ENCODE measurements at regions of chr20 and their contacts with region 1.

Region 1: GRCh38 chr20:57480444-57481160 is 44.3 kb downstream of the CTCFL start:
- DNase-seq: no peak
- H3K4me3 ChIP-seq: no peak overlapping the region
- H3K27ac ChIP-seq: no peak overlapping the region
- H3K4me1 ChIP-seq: no peaks in the 10 kb centered on the region
- H3K27me3 ChIP-seq: no peaks in the 10 kb centered on the region
- CTCF ChIP-seq: no peak

Region 2: GRCh38 chr20:57374931-57375651 is 105.5 kb before region 1 on chr20:
- CTCF ChIA-PET with region 1: no interaction called
- dilution Hi-C with region 1: loop called (anchors 5 kb)
- in situ Hi-C with region 1: no loop called
- intact Hi-C with region 1: no loop called
- DNase-seq: no peak
- H3K4me3 ChIP-seq: no peak overlapping the region
- H3K27ac ChIP-seq: no peak overlapping the region
- H3K4me1 ChIP-seq: no peaks in the 10 kb centered on the region
- H3K27me3 ChIP-seq: no peaks in the 10 kb centered on the region
- CTCF ChIP-seq: no peak

Region 3: DNA sequence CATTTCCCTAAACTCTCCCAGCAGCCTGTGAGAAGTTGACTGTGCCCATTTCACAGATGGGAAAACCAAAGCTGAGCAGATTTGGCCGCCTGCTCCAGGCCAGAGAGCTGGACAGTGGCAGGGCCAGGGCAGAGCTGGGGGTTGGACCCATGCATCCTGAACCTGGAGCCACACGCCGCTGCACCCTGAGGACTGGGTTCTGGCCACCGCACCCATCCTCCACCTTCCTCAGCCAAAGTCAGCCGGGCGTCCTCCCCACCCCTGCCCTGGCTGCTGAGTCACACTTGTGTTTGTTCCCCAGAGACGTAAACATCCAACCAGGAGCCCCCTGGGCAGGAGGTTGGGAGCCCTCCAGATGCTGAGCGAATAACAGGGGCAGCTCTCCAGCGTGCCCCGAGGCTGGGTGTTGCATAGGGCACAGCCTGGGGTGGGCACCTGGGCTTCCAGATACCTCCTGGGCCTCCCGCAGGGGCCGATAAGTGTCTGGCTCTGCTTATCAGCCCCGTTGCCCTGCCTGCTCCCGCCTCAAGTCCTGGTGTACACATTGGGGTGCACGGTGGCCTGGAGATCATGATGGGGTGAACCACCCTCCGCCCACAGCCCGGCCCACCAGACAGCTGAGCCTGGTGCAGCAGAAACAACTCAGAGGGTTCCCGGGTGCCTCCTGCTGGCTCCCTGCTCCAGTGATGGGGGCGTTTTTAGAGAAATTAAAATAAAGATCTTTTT is 65.6 kb before region 1 on chr20:
- CTCF ChIA-PET with region 1: no interaction called
- dilution Hi-C with region 1: loop called (anchors 5 kb)
- in situ Hi-C with region 1: no loop called
- intact Hi-C with region 1: no loop called
- DNase-seq: no peak
- H3K4me3 ChIP-seq: no peak overlapping the region
- H3K27ac ChIP-seq: no peak overlapping the region
- H3K4me1 ChIP-seq: no peaks in the 10 kb centered on the region
- H3K27me3 ChIP-seq: no peaks in the 10 kb centered on the region
- CTCF ChIP-seq: no peak

Region 4: GRCh38 chr20:57440678-57441520 is 39.7 kb before region 1 on chr20:
- CTCF ChIA-PET with region 1: no interaction called
- dilution Hi-C with region 1: loop called (anchors 5 kb)
- in situ Hi-C with region 1: no loop called
- intact Hi-C with region 1: no loop called
- DNase-seq: no peak
- H3K4me3 ChIP-seq: no peak overlapping the region
- H3K27ac ChIP-seq: no peak overlapping the region
- H3K4me1 ChIP-seq: peaks cover 10% of the 10 kb centered on the region
- H3K27me3 ChIP-seq: no peaks in the 10 kb centered on the region
- CTCF ChIP-seq: no peak

Measured in mammary epithelial cell (primary cell).